ENCODE measurements at regions of chr16 and their contacts with region 1.

Region 1: DNA sequence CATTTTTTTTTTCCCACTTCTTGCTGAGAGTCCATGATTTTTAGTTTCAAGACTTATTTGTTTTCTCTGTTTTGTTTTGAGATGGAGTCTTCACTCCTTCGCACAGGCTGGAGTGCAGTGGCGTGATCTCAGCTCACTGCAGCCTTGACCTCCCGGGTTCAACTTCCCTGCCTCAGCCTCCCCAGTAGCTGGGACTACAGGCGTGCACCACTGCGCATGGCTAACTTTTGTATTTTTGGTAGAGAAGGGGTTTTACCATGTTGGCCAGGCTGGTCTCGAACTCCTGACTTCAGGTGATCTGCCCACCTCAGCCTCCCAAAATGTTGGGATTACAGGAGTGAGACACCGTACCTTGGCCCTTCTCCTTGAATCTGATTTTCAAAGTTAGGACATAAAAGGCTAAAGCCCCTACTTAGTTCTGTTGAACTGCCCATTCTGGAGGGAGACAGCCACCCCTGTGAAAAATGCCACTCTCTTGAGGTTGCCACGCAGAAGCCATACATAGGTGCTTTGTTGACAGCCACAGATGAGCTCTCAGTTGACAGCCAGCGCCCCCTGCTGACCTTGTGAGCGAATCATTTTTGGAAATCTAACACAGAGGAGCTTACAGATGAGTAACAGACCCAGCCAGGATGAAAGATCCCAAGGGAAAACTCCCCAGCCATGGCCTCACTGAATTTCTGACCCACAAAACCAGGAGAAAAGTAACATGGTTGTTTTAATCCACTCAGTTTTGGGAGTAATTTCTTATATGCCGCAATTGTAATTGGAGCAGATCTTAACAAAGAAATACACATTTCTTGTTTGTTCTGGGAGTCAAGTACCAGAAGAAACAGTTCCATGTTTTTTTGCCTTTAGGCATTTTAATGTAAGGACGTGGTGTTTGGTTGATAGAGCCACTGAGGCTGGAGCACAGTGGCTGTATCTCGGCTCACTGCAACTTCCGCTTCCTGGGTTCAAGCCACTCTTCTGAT is 38.8 kb downstream of the PKD1L3 start:
- DNase-seq: peak; percentile 67 to 90 (median 78)
- ATAC-seq: peak; percentile 91
- H3K4me3 ChIP-seq: no peak overlapping the region
- H3K4me3 Mint-ChIP-seq: no peak overlapping the region
- H3K27ac ChIP-seq: no peak overlapping the region
- H3K27ac Mint-ChIP-seq: no peak overlapping the region
- H3K4me1 ChIP-seq: peaks cover 6% of the 10 kb centered on the region
- H3K4me1 Mint-ChIP-seq: peaks cover 11% of the 10 kb centered on the region
- H3K27me3 ChIP-seq: no peaks in the 10 kb centered on the region
- H3K27me3 Mint-ChIP-seq: no peaks in the 10 kb centered on the region
- CTCF ChIP-seq: peak; percentile 80

Region 2: GRCh38 chr16:71746442-71747046 is 214.8 kb before region 1 on chr16:
- CTCF ChIA-PET with region 1: interaction called, 3 read pairs
- POLR2A ChIA-PET with region 1: no interaction called
- intact Hi-C with region 1: loop called (anchors 2 to 5 kb)
- DNase-seq: peak in 8 of 14 experiments; percentile 7 to 75 (median 26)
- ATAC-seq: peak; percentile 76
- H3K4me3 ChIP-seq: no peak overlapping the region
- H3K4me3 Mint-ChIP-seq: no peak overlapping the region
- H3K27ac ChIP-seq: no peak overlapping the region
- H3K27ac Mint-ChIP-seq: no peak overlapping the region
- H3K4me1 ChIP-seq: no peaks in the 10 kb centered on the region
- H3K4me1 Mint-ChIP-seq: peaks cover 5% of the 10 kb centered on the region
- H3K27me3 ChIP-seq: no peaks in the 10 kb centered on the region
- H3K27me3 Mint-ChIP-seq: no peaks in the 10 kb centered on the region
- CTCF ChIP-seq: peak; percentile 74

Region 3: GRCh38 chr16:71754652-71755051 is 206.7 kb before region 1 on chr16:
- CTCF ChIA-PET with region 1: interaction called, 3 read pairs
- POLR2A ChIA-PET with region 1: no interaction called
- intact Hi-C with region 1: loop called in 1 of 2 experiments (anchors 5 kb)
- DNase-seq: no peak
- ATAC-seq: no peak
- H3K4me3 ChIP-seq: no peak overlapping the region
- H3K4me3 Mint-ChIP-seq: no peak overlapping the region
- H3K27ac ChIP-seq: no peak overlapping the region
- H3K27ac Mint-ChIP-seq: no peak overlapping the region
- H3K4me1 ChIP-seq: no peaks in the 10 kb centered on the region
- H3K4me1 Mint-ChIP-seq: no peaks in the 10 kb centered on the region
- H3K27me3 ChIP-seq: no peaks in the 10 kb centered on the region
- H3K27me3 Mint-ChIP-seq: no peaks in the 10 kb centered on the region
- CTCF ChIP-seq: no peak

Region 4: DNA sequence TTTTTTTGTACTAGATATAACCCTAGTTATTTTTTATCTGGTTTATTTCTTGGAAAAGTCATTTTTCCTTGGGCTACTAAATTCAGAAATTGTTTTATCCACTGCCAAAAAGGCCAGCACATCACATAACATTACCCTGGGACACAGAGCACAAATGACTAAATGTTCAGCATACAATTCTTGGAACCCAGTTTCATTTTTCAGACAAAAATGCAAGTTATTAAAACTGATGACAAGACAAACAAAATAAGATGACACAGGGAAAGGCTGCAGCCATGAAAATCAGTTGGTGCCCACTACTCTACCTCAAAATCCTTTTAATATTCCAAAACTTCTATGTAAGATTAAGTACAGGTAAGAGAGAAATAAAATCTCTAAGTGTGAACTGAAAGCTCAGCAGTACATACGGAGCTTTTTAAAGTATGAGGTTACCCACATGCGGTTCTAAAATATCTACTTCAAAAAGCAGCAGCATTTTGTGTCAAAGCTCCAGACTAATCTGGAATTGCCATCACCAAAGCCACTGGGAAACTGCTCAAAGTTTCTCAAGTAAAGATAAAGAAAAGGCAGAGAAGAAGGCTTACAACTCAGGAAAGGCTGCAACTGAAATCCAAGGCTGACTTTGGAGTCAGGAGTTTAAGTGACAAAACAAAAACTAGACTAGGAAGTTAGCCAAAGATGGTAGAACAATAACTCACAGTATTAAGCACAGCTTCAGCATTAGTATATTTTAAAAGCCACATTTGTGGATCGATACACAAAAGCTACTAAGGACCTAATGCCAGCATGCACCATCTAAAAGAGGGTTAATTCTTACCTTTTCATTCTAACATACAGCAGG is 194.1 kb before region 1 on chr16:
- CTCF ChIA-PET with region 1: no interaction called
- POLR2A ChIA-PET with region 1: no interaction called
- intact Hi-C with region 1: loop called in 1 of 2 experiments (anchors 5 kb)
- DNase-seq: no peak
- ATAC-seq: no peak
- H3K4me3 ChIP-seq: no peak overlapping the region
- H3K4me3 Mint-ChIP-seq: no peak overlapping the region
- H3K27ac ChIP-seq: no peak overlapping the region
- H3K27ac Mint-ChIP-seq: peak overlapping the region; percentile 3
- H3K4me1 ChIP-seq: no peaks in the 10 kb centered on the region
- H3K4me1 Mint-ChIP-seq: peaks cover 18% of the 10 kb centered on the region
- H3K27me3 ChIP-seq: no peaks in the 10 kb centered on the region
- H3K27me3 Mint-ChIP-seq: no peaks in the 10 kb centered on the region
- CTCF ChIP-seq: no peak

Region 5: GRCh38 chr16:71845639-71846430 is 115.5 kb before region 1 on chr16 and contains the start of gene ATXN1L:
- CTCF ChIA-PET with region 1: no interaction called
- POLR2A ChIA-PET with region 1: no interaction called
- intact Hi-C with region 1: loop called in 1 of 2 experiments (anchors 5 kb)
- DNase-seq: peak; percentile 84 to 97 (median 90)
- ATAC-seq: peak; percentile 91
- H3K4me3 ChIP-seq: peak within 1 kb of the TSS; percentile 97
- H3K4me3 Mint-ChIP-seq: peak within 1 kb of the TSS; percentile 96
- H3K27ac ChIP-seq: peak within 1 kb of the TSS; percentile 82 to 91
- H3K27ac Mint-ChIP-seq: peak within 1 kb of the TSS; percentile 99
- H3K4me1 ChIP-seq: peaks cover 18% of the 10 kb centered on the region
- H3K4me1 Mint-ChIP-seq: peaks cover 35% of the 10 kb centered on the region
- H3K27me3 ChIP-seq: no peaks in the 10 kb centered on the region
- H3K27me3 Mint-ChIP-seq: no peaks in the 10 kb centered on the region
- CTCF ChIP-seq: no peak
- total RNA-seq, gene ATXN1L: 61.0 to 61.1 TPM